MCF 10A (cell line): ENCODE measurements at regions of chr3 and their contacts with region 1.

Region 1: DNA sequence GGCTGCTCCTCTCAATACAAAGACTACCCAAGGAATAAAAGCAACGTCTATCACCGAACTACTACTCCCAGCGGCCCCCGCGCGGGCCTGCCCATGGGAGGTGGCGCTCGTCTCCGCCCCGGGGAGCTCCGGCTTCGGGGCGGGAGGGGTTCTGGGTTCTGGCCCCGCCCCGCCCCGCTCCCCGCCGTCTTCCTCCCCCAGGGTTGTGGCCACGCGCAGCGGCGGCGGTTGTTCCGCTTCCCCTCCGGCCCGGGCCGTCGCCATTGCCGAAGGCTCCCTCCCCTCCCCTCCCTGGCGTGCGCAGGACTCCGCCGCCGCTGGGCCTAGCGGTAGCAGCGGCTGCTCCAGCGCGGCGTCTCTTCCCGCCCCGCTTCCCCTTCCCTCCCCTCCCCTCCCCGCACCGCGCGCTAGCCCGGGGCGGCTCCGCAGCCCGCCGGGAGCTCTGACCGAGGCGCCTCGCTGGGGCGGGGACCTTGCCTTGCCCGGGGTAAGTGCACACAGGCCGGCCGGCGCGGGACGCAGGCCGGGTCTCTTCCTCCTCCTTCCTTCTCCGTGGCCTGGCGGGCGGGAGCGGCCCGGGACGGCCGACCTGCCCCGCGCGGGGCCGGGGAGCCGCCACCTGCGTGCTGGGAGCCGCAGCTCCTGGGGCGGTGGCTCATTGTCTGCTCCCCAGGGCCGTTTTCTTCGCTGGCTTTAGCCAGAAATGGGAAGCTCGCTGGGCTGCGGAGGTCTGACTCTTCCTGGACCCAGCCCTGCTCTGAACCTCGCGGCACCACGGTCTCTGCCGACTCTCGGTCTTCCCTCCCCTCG is at the start of gene PAK2:
- DNase-seq: peak; percentile 90
- H3K4me3 Mint-ChIP-seq: peak within 1 kb of the TSS; percentile 98
- H3K27ac Mint-ChIP-seq: peak within 1 kb of the TSS; percentile 98
- H3K4me1 Mint-ChIP-seq: peaks cover 11% of the 10 kb centered on the region
- H3K27me3 Mint-ChIP-seq: no peaks in the 10 kb centered on the region
- CTCF ChIP-seq: no peak
- total RNA-seq, gene PAK2: 119 and 126 TPM in 2 replicates

Region 2: GRCh38 chr3:196568246-196569002 is 171.5 kb before region 1 on chr3 and contains the starts of genes FBXO45 and WDR53:
- CTCF ChIA-PET with region 1: no interaction called
- POLR2A ChIA-PET with region 1: interaction called, 11 read pairs
- intact Hi-C with region 1: no loop called
- DNase-seq: peak; percentile 95
- H3K4me3 Mint-ChIP-seq: peak within 1 kb of the TSS; percentile 85
- H3K27ac Mint-ChIP-seq: peak within 1 kb of the TSS; percentile 87
- H3K4me1 Mint-ChIP-seq: peaks cover 20% of the 10 kb centered on the region
- H3K27me3 Mint-ChIP-seq: no peaks in the 10 kb centered on the region
- CTCF ChIP-seq: no peak
- total RNA-seq, gene FBXO45: 13.2 and 16.0 TPM in 2 replicates
- total RNA-seq, gene WDR53: 14.4 and 18.8 TPM in 2 replicates

Region 3: GRCh38 chr3:196726788-196727675 is 12.8 kb before region 1 on chr3:
- CTCF ChIA-PET with region 1: no interaction called
- POLR2A ChIA-PET with region 1: interaction called, 15 read pairs
- intact Hi-C with region 1: no loop called
- DNase-seq: peak; percentile 39
- H3K4me3 Mint-ChIP-seq: no peak overlapping the region
- H3K27ac Mint-ChIP-seq: no peak overlapping the region
- H3K4me1 Mint-ChIP-seq: peaks cover 11% of the 10 kb centered on the region
- H3K27me3 Mint-ChIP-seq: no peaks in the 10 kb centered on the region
- CTCF ChIP-seq: no peak

Region 4: DNA sequence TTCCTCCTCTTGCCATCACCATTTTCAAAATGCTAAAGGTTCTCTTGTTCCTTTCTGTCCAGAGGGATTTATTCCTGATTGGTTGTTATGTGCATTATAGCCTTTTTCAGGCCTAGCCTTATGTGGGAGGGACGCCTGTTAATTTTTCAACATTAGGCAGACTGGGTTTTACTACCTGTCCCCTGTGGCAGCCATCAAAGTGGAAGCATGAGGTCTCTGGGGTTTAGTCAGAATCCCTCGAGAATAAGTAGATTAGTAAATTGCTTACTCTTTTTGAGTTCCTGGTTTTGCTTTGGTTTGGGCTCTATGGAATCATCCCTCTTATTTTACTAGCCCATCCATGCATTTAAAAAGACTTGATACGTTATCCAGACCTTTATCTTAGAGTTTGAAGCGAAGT is 32.2 kb after region 1 on chr3:
- CTCF ChIA-PET with region 1: interaction called, 5 read pairs
- POLR2A ChIA-PET with region 1: interaction called, 11 read pairs
- intact Hi-C with region 1: no loop called
- DNase-seq: no peak
- H3K4me3 Mint-ChIP-seq: no peak overlapping the region
- H3K27ac Mint-ChIP-seq: peak overlapping the region; percentile 58
- H3K4me1 Mint-ChIP-seq: peaks cover 8% of the 10 kb centered on the region
- H3K27me3 Mint-ChIP-seq: no peaks in the 10 kb centered on the region
- CTCF ChIP-seq: no peak

Region 5: GRCh38 chr3:196793235-196793641 is 53.4 kb after region 1 on chr3:
- CTCF ChIA-PET with region 1: interaction called, 3 read pairs
- POLR2A ChIA-PET with region 1: interaction called, 41 read pairs
- intact Hi-C with region 1: loop called (anchors 2 kb)
- DNase-seq: peak; percentile 91
- H3K4me3 Mint-ChIP-seq: peak overlapping the region; percentile 45
- H3K27ac Mint-ChIP-seq: peak overlapping the region; percentile 71
- H3K4me1 Mint-ChIP-seq: peaks cover 24% of the 10 kb centered on the region
- H3K27me3 Mint-ChIP-seq: no peaks in the 10 kb centered on the region
- CTCF ChIP-seq: no peak

Region 6: DNA sequence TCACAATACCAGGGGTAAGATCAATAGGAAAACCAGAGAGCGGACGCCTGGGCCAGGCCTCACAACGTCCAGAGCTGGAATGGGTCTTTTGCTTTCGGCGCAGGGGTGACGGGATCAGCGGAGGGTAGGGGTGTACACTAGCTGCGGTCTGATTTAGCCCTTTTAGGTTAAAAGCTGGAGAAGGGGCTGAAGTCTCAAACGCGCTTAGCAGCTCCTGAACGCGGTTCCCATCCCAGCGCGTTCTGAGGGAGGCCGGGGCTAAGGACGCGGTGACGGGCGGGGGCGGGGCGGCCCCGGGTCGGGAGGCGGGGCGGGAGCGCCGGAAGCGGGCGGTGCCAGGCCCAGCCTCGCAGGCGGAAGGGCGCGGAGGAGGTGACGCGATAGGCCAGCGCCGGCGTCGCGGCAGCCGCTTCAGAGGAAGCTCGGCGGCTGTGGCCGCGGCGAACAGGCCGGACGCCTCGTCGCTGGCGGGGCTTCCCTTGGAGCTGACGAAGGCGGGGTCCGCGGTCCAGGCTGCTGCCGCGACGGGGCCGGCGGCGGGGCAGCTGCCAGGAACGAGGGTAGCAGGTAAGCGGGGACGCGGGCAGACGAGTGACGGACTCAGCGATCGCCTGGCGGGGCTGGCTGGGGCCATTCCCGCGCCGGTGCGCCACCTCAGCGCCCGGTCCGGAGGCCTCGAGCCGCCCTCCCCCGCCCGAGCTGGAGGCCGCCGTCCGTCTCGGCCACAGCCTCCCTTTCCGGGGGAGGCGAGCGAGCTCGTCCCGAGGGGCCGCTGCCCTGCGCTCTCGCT is 127.8 kb after region 1 on chr3 and contains the start of gene SENP5:
- CTCF ChIA-PET with region 1: interaction called, 3 read pairs
- POLR2A ChIA-PET with region 1: interaction called, 66 read pairs
- intact Hi-C with region 1: no loop called
- DNase-seq: peak; percentile 86
- H3K4me3 Mint-ChIP-seq: peak within 1 kb of the TSS; percentile 90
- H3K27ac Mint-ChIP-seq: peak within 1 kb of the TSS; percentile 93
- H3K4me1 Mint-ChIP-seq: no peaks in the 10 kb centered on the region
- H3K27me3 Mint-ChIP-seq: no peaks in the 10 kb centered on the region
- CTCF ChIP-seq: no peak
- total RNA-seq, gene SENP5: 30.2 and 37.0 TPM in 2 replicates

Region 7: DNA sequence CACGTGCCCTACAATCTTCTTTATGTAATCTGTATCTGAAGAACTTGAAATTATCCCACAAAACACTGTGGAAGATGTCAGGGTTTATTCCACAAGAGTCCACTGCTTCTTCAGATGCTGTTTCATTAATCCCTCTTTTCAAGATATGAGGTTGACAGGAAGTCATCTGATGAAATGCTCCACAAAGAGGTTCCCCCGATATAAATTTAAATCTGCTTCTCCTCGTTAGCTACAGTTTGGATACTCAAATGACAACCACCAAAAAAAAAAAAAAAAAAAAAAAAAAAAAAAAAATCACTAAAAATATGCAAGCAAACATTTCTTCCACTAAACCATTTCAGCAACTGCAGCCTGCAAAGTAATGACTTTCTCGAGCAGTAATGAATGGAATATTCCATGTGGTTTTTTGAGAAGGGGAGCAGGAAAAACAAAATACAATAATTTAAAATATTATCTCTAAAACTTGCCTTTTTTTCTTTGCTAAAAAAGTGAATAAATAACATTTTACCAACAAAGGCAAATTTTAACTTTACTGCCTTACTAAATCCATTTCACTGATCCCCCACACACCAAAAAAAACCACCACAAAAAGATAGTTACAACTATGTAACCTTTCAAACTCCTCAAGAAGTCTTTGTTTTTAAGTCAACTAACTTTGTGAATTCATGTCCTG is 520.8 kb after region 1 on chr3:
- CTCF ChIA-PET with region 1: no interaction called
- POLR2A ChIA-PET with region 1: no interaction called
- intact Hi-C with region 1: no loop called
- DNase-seq: no peak
- H3K4me3 Mint-ChIP-seq: no peak overlapping the region
- H3K27ac Mint-ChIP-seq: no peak overlapping the region
- H3K4me1 Mint-ChIP-seq: peaks cover 8% of the 10 kb centered on the region
- H3K27me3 Mint-ChIP-seq: no peaks in the 10 kb centered on the region
- CTCF ChIP-seq: no peak

Region 8: GRCh38 chr3:197297020-197297573 is 557.2 kb after region 1 on chr3:
- CTCF ChIA-PET with region 1: no interaction called
- POLR2A ChIA-PET with region 1: no interaction called
- intact Hi-C with region 1: no loop called
- DNase-seq: peak; percentile 35
- H3K4me3 Mint-ChIP-seq: peak overlapping the region; percentile 94
- H3K27ac Mint-ChIP-seq: peak overlapping the region; percentile 97
- H3K4me1 Mint-ChIP-seq: peaks cover 18% of the 10 kb centered on the region
- H3K27me3 Mint-ChIP-seq: no peaks in the 10 kb centered on the region
- CTCF ChIP-seq: no peak